MCF 10A (cell line): ENCODE measurements at regions of chr12 and their contacts with region 1.

Region 1: GRCh38 chr12:76586764-76587395 is 27.3 kb upstream of the OSBPL8 start:
- DNase-seq: peak; percentile 61
- H3K4me3 Mint-ChIP-seq: no peak overlapping the region
- H3K27ac Mint-ChIP-seq: peak overlapping the region; percentile 79
- H3K4me1 Mint-ChIP-seq: peaks cover 35% of the 10 kb centered on the region
- H3K27me3 Mint-ChIP-seq: no peaks in the 10 kb centered on the region
- CTCF ChIP-seq: peak; percentile 65

Region 2: DNA sequence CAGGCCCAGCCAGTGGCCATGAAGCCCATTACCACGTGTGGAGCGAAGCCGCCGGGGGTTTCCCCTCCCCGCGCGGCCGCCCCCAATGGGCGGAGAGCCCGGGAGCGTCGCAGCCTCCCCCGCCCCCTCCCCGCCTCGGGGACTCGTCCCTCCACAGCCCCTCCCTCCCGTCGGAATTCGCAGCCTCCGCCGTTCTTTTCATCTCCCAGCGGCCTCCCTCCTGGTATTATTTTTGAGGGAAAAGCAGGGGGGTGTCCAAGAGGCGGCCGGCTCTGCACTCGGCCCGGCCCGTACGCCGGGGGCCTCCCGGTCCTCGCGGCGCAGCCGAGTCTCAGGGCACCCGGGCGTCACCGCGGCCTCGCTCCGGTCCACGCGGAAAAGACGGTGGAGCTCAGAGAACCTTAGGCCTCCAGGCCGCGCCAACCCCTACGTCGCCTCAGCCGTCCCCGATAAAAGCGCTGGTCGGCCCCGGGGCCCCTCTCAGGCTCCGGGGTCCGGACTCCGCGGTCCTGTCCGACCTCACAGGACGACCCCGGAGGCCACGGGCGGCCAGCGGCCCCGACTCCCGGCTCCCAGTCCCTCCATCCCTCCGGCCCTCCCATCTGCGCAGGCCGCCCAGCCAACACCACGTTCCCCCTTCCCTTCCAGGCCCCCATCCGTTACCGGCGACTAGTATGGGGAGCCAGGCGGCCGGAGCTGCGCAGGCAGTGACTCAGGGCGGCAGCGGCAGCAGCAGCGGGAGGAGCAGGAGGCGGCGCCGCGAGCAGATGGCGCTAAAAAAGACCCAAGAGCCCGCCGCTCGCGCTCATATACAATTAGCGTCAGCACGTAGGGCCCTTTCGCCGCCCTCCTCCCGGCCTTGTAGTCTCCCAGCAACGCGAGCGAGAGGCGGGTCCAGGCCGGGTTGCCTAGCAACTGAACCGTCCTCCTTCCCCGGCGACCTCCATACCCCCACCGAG is 502.7 kb before region 1 on chr12 and contains the start of gene NAP1L1:
- CTCF ChIA-PET with region 1: no interaction called
- POLR2A ChIA-PET with region 1: interaction called, 4 read pairs
- intact Hi-C with region 1: loop called (anchors 1 kb)
- DNase-seq: peak; percentile 98
- H3K4me3 Mint-ChIP-seq: peak within 1 kb of the TSS; percentile 86
- H3K27ac Mint-ChIP-seq: peak within 1 kb of the TSS; percentile 86
- H3K4me1 Mint-ChIP-seq: peaks cover 20% of the 10 kb centered on the region
- H3K27me3 Mint-ChIP-seq: no peaks in the 10 kb centered on the region
- CTCF ChIP-seq: no peak
- total RNA-seq, gene NAP1L1: 327 and 493 TPM in 2 replicates

Region 3: GRCh38 chr12:76464631-76465166 is 122.2 kb before region 1 on chr12:
- CTCF ChIA-PET with region 1: interaction called, 23 read pairs
- POLR2A ChIA-PET with region 1: interaction called, 3 read pairs
- intact Hi-C with region 1: no loop called
- DNase-seq: no peak
- H3K4me3 Mint-ChIP-seq: no peak overlapping the region
- H3K27ac Mint-ChIP-seq: no peak overlapping the region
- H3K4me1 Mint-ChIP-seq: peaks cover 19% of the 10 kb centered on the region
- H3K27me3 Mint-ChIP-seq: no peaks in the 10 kb centered on the region
- CTCF ChIP-seq: no peak

Region 4: GRCh38 chr12:76559400-76560085 is 27.3 kb before region 1 on chr12 and contains the start of gene OSBPL8:
- CTCF ChIA-PET with region 1: interaction called, 42 read pairs
- POLR2A ChIA-PET with region 1: interaction called, 62 read pairs
- intact Hi-C with region 1: no loop called
- DNase-seq: peak; percentile 95
- H3K4me3 Mint-ChIP-seq: peak within 1 kb of the TSS; percentile 89
- H3K27ac Mint-ChIP-seq: peak within 1 kb of the TSS; percentile 95
- H3K4me1 Mint-ChIP-seq: peaks cover 24% of the 10 kb centered on the region
- H3K27me3 Mint-ChIP-seq: no peaks in the 10 kb centered on the region
- CTCF ChIP-seq: no peak
- total RNA-seq, gene OSBPL8: 71.1 and 77.2 TPM in 2 replicates

Region 5: DNA sequence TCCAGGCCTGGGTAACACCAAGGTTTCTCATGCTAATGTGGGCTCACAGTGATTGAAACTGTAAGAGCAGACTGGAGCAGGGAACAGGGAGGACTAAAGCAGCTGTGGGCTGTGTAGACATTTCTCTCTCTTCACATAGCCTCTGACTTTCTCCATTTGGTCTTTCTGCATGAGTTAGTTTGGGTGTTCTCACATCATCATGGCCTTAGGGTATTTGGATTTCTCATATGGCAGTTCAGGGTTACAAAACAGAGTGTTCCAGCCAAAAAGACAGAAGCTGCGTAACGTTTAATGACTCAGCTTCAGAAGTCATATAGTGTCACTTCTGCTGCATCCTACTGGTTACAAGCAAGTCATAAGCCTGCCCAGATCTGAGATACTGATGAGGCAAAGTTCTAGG is 24.7 kb after region 1 on chr12:
- CTCF ChIA-PET with region 1: interaction called, 4 read pairs
- POLR2A ChIA-PET with region 1: interaction called, 23 read pairs
- intact Hi-C with region 1: no loop called
- DNase-seq: peak; percentile 98
- H3K4me3 Mint-ChIP-seq: peak overlapping the region; percentile 44
- H3K27ac Mint-ChIP-seq: peak overlapping the region; percentile 90
- H3K4me1 Mint-ChIP-seq: peaks cover 26% of the 10 kb centered on the region
- H3K27me3 Mint-ChIP-seq: no peaks in the 10 kb centered on the region
- CTCF ChIP-seq: no peak